ENCODE measurements at regions of chr6 and their contacts with region 1.

Region 1: DNA sequence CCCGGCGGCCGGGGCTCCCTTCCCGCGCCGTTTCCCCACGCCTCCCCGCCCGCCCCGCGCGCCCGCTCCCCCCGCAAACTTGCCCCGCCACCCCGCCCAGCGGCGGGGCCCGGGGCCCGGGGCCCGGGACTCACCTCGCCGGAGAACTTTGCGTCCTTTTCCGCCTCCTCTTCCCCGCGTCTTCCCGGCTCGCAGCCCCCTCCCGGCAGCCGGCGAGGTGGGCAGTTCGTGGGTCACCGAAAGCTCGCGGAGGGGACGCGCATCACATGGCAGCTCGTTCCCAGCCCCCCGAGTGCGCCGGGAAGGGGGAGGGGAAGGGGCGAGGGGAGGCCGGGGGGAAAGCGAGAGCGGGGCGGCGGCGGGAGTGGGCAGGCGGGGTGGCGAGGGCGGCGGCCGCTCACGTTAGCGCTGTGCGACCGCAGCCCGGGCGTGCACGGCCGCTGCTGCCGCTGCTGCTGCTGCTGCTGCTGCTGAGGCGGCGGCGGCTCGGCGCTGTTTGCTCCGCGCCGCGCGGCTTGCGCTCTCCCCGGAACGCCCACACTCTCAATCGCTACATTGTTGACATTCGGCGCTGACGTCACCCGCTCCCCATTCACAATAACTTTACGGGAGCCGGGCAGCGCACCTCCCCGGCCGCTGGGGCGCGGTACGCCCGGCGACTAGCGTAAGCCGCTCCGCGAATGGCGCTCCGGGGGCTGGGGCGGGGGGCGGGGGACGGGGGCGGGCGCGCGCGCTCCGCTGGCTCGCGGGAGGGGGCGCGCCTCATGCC is at the start of gene BACH2:
- DNase-seq: peak; percentile 93 to 96 (median 96)
- H3K4me3 ChIP-seq: peak within 1 kb of the TSS; percentile 58
- H3K27ac ChIP-seq: peak within 1 kb of the TSS; percentile 94 to 97
- H3K4me1 ChIP-seq: peaks cover 4% of the 10 kb centered on the region
- H3K27me3 ChIP-seq: no peaks in the 10 kb centered on the region
- CTCF ChIP-seq: peak in 1 of 3 donors; percentile 23
- EP300 ChIP-seq: no peak
- POLR2A ChIP-seq: peak; percentile 60
- total RNA-seq, gene BACH2: 7.4 to 19.2 (median 16.1) TPM

Region 2: DNA sequence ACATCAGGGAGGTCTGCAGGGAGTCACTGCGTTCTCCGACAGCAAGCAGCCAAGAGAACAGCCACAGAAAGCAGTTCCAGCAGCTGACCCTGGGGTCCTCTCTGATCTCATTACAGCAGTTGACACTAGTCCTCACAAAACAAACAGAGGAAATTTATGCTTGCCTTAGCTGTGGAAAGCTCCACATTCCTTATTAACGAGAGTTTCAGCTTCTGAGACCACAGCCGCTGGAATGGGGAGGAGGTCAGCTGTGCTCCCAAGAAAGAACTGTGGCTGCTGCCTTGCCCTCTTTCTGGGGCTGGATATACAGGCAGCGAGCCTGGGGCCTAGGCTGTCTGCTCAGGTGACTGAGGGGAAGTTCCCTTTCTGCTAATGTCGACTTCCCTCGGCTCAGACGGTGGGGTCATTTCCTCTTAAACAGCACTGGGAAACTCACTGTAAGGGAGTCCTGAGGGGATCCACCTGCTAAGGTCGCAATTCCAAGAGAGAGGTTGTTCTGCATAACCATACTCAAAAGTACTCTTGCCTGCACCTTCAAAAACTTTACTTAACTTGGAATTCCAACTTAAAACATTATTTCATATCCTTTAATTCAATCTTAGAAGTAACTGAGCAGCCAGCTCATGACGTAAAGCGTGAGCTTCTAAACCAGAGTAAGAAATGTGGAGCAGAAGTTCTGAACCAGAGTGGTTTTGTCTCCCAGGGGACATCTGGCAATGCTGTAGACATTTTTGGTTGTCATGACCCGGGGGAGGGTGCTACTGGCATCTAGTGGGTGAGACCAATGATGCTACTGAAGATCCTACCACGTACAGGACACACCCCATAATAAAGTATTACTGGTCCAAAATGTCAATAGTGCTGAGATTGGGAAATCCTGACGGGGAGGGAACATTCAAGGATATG is 80.2 kb before region 1 on chr6:
- intact Hi-C with region 1: loop called in 1 of 4 experiments (anchors 2 kb)
- DNase-seq: no peak
- H3K4me3 ChIP-seq: no peak overlapping the region
- H3K27ac ChIP-seq: no peak overlapping the region
- H3K4me1 ChIP-seq: peaks cover 18% of the 10 kb centered on the region
- H3K27me3 ChIP-seq: no peaks in the 10 kb centered on the region
- CTCF ChIP-seq: no peak
- EP300 ChIP-seq: no peak
- POLR2A ChIP-seq: no peak

Region 3: DNA sequence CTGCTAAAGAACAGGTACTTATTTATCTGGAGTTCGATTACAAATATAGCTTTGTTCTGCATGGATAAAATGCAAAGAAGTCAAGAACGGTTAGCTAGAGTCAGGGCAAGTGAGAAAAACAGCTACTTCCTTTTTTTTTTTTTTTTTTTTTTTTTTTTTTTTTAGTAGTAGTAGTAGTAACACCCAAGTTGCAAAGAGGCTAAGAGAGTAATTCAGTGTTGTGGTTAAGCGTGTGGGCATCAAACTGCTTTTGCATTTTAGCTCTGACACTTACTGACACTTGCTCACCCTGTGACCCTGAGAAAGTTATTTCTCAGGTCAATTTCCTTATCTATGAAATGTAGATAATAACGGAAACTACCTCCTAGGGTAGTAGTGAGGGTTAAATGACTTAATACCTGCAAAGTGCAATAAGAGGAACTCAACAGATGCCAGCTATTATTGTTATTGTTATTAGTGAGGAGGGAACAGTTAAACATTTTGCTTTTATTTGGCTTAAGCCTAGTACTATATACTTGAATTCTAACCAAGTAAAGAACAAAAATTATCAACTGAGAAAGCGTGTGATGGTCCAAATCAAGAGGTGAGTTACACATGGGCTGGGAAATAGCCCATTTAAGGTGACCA is 86.8 kb after region 1 on chr6:
- intact Hi-C with region 1: loop called in 1 of 4 experiments (anchors 10 kb)
- DNase-seq: no peak
- H3K4me3 ChIP-seq: no peak overlapping the region
- H3K27ac ChIP-seq: no peak overlapping the region
- H3K4me1 ChIP-seq: no peaks in the 10 kb centered on the region
- H3K27me3 ChIP-seq: no peaks in the 10 kb centered on the region
- CTCF ChIP-seq: no peak
- EP300 ChIP-seq: no peak
- POLR2A ChIP-seq: no peak